Activated T-helper 1 cell treated with anti-CD3 and anti-CD28 coated beads, Interleukin-12 subunit alpha, Interleukin-12 subunit beta, Interleukin-2, Interleukin-4 antibody, amounts not matched to agents 30 ng/mL and 10 ng/mL and 1 ng/mL, durations not matched to agents 14 hours and 24 hours and 36 hours (primary cell): ENCODE measurements at regions of chr2 and their contacts with region 1.

Region 1: GRCh38 chr2:161992526-161992925 is 81.5 kb downstream of the DPP4 start:
- DNase-seq: peak; percentile 61
- H3K4me3 Mint-ChIP-seq: peak overlapping the region; percentile 83
- H3K27ac Mint-ChIP-seq: peak overlapping the region; percentile 96
- H3K4me1 Mint-ChIP-seq: peaks cover 78% of the 10 kb centered on the region
- H3K27me3 Mint-ChIP-seq: no peaks in the 10 kb centered on the region

Region 2: GRCh38 chr2:161436411-161436810 is 556.1 kb before region 1 on chr2:
- intact Hi-C with region 1: no loop called
- DNase-seq: no peak
- H3K4me3 Mint-ChIP-seq: no peak overlapping the region
- H3K27ac Mint-ChIP-seq: no peak overlapping the region
- H3K4me1 Mint-ChIP-seq: no peaks in the 10 kb centered on the region
- H3K27me3 Mint-ChIP-seq: peaks cover 60% of the 10 kb centered on the region

Region 3: DNA sequence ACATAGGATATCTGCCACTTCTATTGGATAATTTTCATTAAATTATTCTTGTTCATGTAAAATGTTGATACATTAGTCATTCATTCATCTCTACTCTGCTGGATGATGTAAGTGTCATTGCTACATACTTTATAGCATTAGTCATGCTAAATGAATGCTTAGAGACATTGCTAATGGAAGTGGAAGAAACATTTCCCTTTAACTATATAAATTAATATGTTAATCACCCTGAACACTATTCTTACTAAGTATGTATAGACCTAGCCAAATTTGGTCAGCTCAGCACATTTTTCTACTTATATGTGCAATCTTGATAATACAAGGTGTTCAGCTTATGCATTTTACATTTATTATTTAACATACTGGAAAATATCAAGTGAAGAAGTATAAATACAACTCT is 78.7 kb before region 1 on chr2:
- intact Hi-C with region 1: no loop called
- DNase-seq: no peak
- H3K4me3 Mint-ChIP-seq: no peak overlapping the region
- H3K27ac Mint-ChIP-seq: no peak overlapping the region
- H3K4me1 Mint-ChIP-seq: no peaks in the 10 kb centered on the region
- H3K27me3 Mint-ChIP-seq: peaks cover 9% of the 10 kb centered on the region

Region 4: GRCh38 chr2:161965994-161966393 is 26.5 kb before region 1 on chr2:
- intact Hi-C with region 1: loop called (anchors 1 kb)
- DNase-seq: no peak
- H3K4me3 Mint-ChIP-seq: no peak overlapping the region
- H3K27ac Mint-ChIP-seq: peak overlapping the region; percentile 1
- H3K4me1 Mint-ChIP-seq: peaks cover 86% of the 10 kb centered on the region
- H3K27me3 Mint-ChIP-seq: no peaks in the 10 kb centered on the region

Region 5: GRCh38 chr2:161981679-161982250 is 10.8 kb before region 1 on chr2:
- intact Hi-C with region 1: loop called (anchors 1 kb)
- DNase-seq: no peak
- H3K4me3 Mint-ChIP-seq: no peak overlapping the region
- H3K27ac Mint-ChIP-seq: peak overlapping the region; percentile 89
- H3K4me1 Mint-ChIP-seq: peaks cover 61% of the 10 kb centered on the region
- H3K27me3 Mint-ChIP-seq: no peaks in the 10 kb centered on the region

Region 6: GRCh38 chr2:162007447-162008040 is 15.0 kb after region 1 on chr2:
- intact Hi-C with region 1: loop called (anchors 1 kb)
- DNase-seq: no peak
- H3K4me3 Mint-ChIP-seq: no peak overlapping the region
- H3K27ac Mint-ChIP-seq: no peak overlapping the region
- H3K4me1 Mint-ChIP-seq: peaks cover 83% of the 10 kb centered on the region
- H3K27me3 Mint-ChIP-seq: no peaks in the 10 kb centered on the region

Region 7: DNA sequence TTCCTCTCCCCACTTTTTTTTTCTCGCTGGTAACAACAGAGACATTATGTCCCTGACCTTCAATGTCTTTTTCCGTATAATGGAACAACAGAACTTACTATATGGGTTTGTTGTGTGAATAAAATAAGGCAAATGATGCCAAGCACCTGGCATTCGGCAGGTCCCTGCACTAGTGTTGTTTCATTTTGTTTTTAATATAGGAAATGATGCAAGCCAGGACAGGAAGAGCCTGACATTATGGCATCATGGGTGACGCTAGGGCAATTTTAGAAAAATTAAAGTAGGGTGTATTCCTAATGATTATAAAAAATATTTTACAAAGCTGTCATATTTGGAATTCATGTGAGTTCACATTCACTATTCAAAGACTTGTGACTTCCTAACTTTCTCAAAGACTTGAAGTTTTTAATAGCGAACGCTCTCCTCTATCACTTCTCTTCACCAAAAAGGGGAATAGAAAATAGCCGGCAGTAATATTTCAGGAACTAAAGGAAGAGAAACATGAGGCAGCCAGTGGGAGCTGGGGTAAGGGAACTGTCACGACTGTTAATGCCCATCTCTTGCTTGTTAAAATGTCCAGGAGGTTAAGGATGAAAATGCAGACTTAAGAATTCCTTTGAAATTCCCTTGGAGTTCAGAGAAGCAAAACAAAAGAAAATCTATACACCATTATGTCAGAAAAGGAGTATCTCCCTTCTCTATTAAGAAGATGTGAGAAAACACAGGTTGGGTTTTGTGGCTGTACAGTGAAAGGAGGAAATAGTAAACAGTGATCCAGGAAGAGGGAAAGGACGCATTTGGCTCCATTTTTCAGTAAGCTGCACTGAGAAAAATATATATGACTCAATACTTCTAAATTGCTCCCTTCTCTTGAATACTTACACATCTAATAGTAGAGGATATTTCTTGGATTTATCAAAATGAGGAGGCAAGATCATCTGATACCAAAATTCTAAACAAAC is 21.3 kb after region 1 on chr2:
- intact Hi-C with region 1: loop called (anchors 1 kb)
- DNase-seq: no peak
- H3K4me3 Mint-ChIP-seq: peak overlapping the region; percentile 81
- H3K27ac Mint-ChIP-seq: peak overlapping the region; percentile 95
- H3K4me1 Mint-ChIP-seq: peaks cover 95% of the 10 kb centered on the region
- H3K27me3 Mint-ChIP-seq: no peaks in the 10 kb centered on the region

Region 8: GRCh38 chr2:162025121-162026031 is 32.9 kb after region 1 on chr2:
- intact Hi-C with region 1: loop called (anchors 1 kb)
- DNase-seq: no peak
- H3K4me3 Mint-ChIP-seq: peak overlapping the region; percentile 52
- H3K27ac Mint-ChIP-seq: peak overlapping the region; percentile 70
- H3K4me1 Mint-ChIP-seq: peaks cover 74% of the 10 kb centered on the region
- H3K27me3 Mint-ChIP-seq: no peaks in the 10 kb centered on the region

Region 9: GRCh38 chr2:162153608-162154224 is 161.2 kb after region 1 on chr2:
- intact Hi-C with region 1: no loop called
- DNase-seq: peak; percentile 36
- H3K4me3 Mint-ChIP-seq: peak overlapping the region; percentile 28
- H3K27ac Mint-ChIP-seq: no peak overlapping the region
- H3K4me1 Mint-ChIP-seq: peaks cover 7% of the 10 kb centered on the region
- H3K27me3 Mint-ChIP-seq: peaks cover 37% of the 10 kb centered on the region